ENCODE measurements at regions of chrX and their contacts with region 1.

Region 1: DNA sequence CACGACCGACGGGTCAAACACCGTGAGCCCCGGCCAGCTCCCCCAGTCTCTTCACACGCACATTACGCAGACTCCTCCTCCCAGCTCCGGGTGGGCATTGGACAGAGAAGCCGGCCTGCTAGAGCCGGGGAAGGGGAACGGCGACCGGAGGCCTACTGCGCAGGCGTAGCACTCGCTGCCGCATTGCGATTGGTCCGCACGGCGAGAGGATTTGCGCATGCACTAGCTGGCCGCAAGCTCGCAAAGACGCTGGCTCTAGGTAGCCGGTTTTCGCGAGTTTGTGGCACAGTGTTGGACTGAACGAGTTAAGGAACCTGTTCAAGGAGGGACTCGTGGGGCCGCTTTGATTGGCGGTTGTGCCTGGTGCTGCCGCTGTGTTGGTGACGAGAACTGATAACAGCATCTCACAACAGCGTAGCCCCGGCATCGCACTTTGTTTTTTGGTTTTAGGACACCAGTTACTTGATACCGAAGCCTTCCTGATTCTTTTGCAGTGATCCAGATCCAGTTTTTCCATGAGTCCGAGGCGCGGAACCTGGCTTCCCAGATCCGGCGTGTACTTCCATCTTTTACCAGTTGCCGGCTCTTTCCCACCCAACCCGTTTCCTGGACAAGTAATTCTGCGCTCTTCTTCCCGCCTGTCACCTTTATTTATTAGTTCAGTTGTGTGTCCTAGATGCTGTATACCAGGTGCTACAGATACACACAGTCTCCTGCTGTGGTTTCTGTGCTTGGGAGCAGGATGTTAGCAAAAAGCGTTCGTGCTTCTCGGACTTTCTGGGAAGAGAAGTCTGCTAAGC is at the start of gene AIFM1:
- DNase-seq: peak; percentile 89 to 93
- ATAC-seq: peak; percentile 92 to 98
- H3K4me3 ChIP-seq: peak within 1 kb of the TSS; percentile 62 to 81 (median 74)
- H3K27ac ChIP-seq: peak within 1 kb of the TSS; percentile 88 to 94 (median 90)
- H3K4me1 ChIP-seq: peaks cover 11 to 18% of the 10 kb centered on the region in 2 donors
- H3K27me3 ChIP-seq: no peaks in the 10 kb centered on the region
- CTCF ChIP-seq: no peak
- POLR2A ChIP-seq: peak; percentile 61 to 69
- total RNA-seq, gene AIFM1: 18.9 to 50.1 (median 30.0) TPM

Region 2: GRCh38 chrX:130060122-130061069 is 105.5 kb before region 1 on chrX:
- in situ Hi-C with region 1: no loop called
- intact Hi-C with region 1: loop called (anchors 1 kb)
- DNase-seq: peak; percentile 45 to 65
- ATAC-seq: peak; percentile 91 to 94
- H3K4me3 ChIP-seq: peak overlapping the region; percentile 56 to 70 (median 58)
- H3K27ac ChIP-seq: peak overlapping the region; percentile 64 to 76 (median 68)
- H3K4me1 ChIP-seq: peaks cover 0 to 6% of the 10 kb centered on the region in 2 donors
- H3K27me3 ChIP-seq: no peaks in the 10 kb centered on the region
- CTCF ChIP-seq: peak; percentile 80 to 92 (median 88)
- POLR2A ChIP-seq: no peak

Region 3: DNA sequence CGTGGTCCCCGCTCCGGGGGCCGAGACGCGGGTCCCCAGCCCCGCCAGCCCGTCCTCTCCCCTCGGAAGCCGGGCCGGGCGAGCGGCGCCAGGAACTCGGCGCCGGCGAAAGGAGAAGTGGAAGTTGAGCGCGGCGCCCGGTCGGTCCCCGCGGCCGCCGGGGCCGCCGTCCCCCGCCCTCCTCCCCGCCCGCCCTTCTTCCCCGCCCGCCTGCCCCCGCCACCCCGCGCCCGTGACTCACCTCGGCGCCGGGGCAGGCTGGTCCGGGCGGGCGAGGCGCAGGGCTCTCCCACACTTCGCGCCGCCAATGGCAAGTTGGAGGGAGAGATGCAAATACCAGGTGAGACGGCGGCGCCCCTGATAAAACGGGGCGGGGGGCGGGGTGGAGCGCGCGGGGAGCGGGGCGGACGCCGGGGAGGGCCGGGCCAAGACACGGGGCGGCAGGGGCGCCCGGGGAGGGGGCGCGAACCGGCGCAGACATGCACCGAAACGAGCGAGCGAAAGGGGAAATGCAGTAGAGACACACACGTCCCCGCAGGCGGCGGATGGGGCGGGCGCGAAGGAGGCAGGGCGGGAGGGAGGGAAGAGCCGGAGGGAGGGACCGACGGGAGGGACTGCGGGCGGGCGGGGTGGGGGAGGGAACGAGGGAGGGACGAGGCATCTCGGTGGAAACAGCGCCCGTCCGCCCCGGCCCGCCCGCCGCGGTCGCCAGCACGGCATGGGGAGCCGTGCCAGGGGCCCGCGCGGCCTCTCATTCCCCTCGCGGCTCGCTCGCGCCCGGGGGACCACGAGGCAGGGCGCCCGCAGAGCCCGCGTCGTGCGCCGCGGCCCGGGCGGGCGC is 55.3 kb before region 1 on chrX and contains the start of gene ELF4:
- in situ Hi-C with region 1: no loop called
- intact Hi-C with region 1: loop called (anchors 2 kb)
- DNase-seq: no peak
- ATAC-seq: peak; percentile 63 to 73
- H3K4me3 ChIP-seq: peak within 1 kb of the TSS; percentile 47 to 57 (median 54)
- H3K27ac ChIP-seq: peak within 1 kb of the TSS; percentile 60 to 78 (median 74)
- H3K4me1 ChIP-seq: no peaks in the 10 kb centered on the region
- H3K27me3 ChIP-seq: peaks cover 0 to 8% (median 7%) of the 10 kb centered on the region in 3 donors
- CTCF ChIP-seq: no peak
- POLR2A ChIP-seq: peak in 1 of 2 donors; percentile 11
- total RNA-seq, gene ELF4: 0.70 to 2.3 (median 1.4) TPM